Heart left ventricle (tissue), 16 donors: ENCODE measurements at regions of chr3 and their contacts with region 1.

Region 1: DNA sequence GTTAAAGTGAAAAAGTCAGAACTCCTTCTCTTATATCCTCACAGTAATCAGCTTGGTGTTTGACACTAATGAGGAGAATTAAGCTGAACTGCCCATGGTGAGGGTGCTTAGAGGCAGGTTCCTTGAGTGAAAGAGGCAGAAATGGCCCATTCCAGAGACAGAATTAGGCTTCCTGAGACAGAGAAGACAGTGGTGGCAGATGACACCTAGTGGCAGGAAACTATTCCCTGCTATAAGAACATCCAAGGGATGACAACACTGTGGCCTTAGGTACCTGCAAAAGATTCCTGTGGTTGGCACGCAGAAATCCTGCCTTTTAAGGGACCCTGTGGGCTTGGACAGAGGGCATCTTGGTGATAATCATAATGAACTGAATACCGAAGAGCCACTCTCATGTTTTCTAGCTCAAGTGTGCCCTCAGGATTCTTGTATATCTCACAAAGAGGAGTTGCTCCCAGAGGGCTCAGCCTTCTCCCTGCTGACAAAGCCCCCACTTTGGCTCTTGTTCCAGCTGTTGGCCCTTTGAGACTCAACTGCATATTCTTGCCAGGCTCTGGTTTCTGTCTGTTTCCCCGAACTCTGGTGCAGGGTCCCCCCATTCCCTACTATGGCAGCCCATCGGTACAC is 56.0 kb downstream of the KBTBD12 start:
- DNase-seq: no peak
- ATAC-seq: peak in 3 of 4 donors; percentile 79 to 86 (median 85)
- H3K4me3 ChIP-seq: no peak overlapping the region
- H3K27ac ChIP-seq: no peak overlapping the region
- H3K4me1 ChIP-seq: peaks cover 0 to 8% (median 0%) of the 10 kb centered on the region in 12 donors
- H3K27me3 ChIP-seq: no peaks in the 10 kb centered on the region
- CTCF ChIP-seq: peak; percentile 46 to 80 (median 68)
- POLR2A ChIP-seq: no peak

Region 2: GRCh38 chr3:127574880-127575878 is 395.9 kb before region 1 on chr3:
- intact Hi-C with region 1: loop called in 5 of 10 experiments (anchors 5 to 10 kb)
- DNase-seq: peak; percentile 81 to 91 (median 84)
- ATAC-seq: peak; percentile 36 to 85 (median 78)
- H3K4me3 ChIP-seq: no peak overlapping the region
- H3K27ac ChIP-seq: no peak overlapping the region
- H3K4me1 ChIP-seq: peaks cover 0 to 22% (median 7%) of the 10 kb centered on the region in 12 donors
- H3K27me3 ChIP-seq: no peaks in the 10 kb centered on the region
- CTCF ChIP-seq: peak; percentile 95 to 98 (median 98)
- POLR2A ChIP-seq: no peak

Region 3: GRCh38 chr3:127652231-127652995 is 318.7 kb before region 1 on chr3:
- intact Hi-C with region 1: loop called in 9 of 10 experiments (anchors 1 to 5 kb)
- DNase-seq: peak in 3 of 5 donors; percentile 55 to 61 (median 60)
- ATAC-seq: peak; percentile 64 to 89 (median 88)
- H3K4me3 ChIP-seq: peak overlapping the region in 1 of 12 donors; percentile 19
- H3K27ac ChIP-seq: no peak overlapping the region
- H3K4me1 ChIP-seq: peaks cover 0 to 12% (median 4%) of the 10 kb centered on the region in 12 donors
- H3K27me3 ChIP-seq: no peaks in the 10 kb centered on the region
- CTCF ChIP-seq: peak; percentile 83 to 96 (median 92)
- POLR2A ChIP-seq: no peak

Region 4: GRCh38 chr3:127762077-127762786 is 208.8 kb before region 1 on chr3:
- intact Hi-C with region 1: loop called in 3 of 10 experiments (anchors 5 to 10 kb)
- DNase-seq: peak in 4 of 5 donors; percentile 53 to 75 (median 60)
- ATAC-seq: peak; percentile 62 to 82 (median 73)
- H3K4me3 ChIP-seq: peak overlapping the region in 2 of 12 donors; percentile 23 to 29
- H3K27ac ChIP-seq: peak overlapping the region; percentile 51 to 88 (median 68)
- H3K4me1 ChIP-seq: peaks cover 0 to 66% (median 48%) of the 10 kb centered on the region in 12 donors
- H3K27me3 ChIP-seq: no peaks in the 10 kb centered on the region
- CTCF ChIP-seq: no peak
- POLR2A ChIP-seq: no peak

Region 5: GRCh38 chr3:127831723-127832172 is 139.3 kb before region 1 on chr3:
- intact Hi-C with region 1: loop called in 4 of 10 experiments (anchors 10 kb)
- DNase-seq: peak in 4 of 5 donors; percentile 52 to 79 (median 58)
- ATAC-seq: peak in 3 of 4 donors; percentile 59 to 78 (median 63)
- H3K4me3 ChIP-seq: no peak overlapping the region
- H3K27ac ChIP-seq: no peak overlapping the region
- H3K4me1 ChIP-seq: no peaks in the 10 kb centered on the region
- H3K27me3 ChIP-seq: no peaks in the 10 kb centered on the region
- CTCF ChIP-seq: peak; percentile 64 to 81 (median 72)
- POLR2A ChIP-seq: no peak

Region 6: GRCh38 chr3:127857333-127857732 is 113.7 kb before region 1 on chr3:
- intact Hi-C with region 1: loop called in 3 of 10 experiments (anchors 10 kb)
- DNase-seq: no peak
- ATAC-seq: no peak
- H3K4me3 ChIP-seq: no peak overlapping the region
- H3K27ac ChIP-seq: no peak overlapping the region
- H3K4me1 ChIP-seq: no peaks in the 10 kb centered on the region
- H3K27me3 ChIP-seq: no peaks in the 10 kb centered on the region
- CTCF ChIP-seq: peak in 3 of 12 donors; percentile 10 to 16 (median 15)
- POLR2A ChIP-seq: no peak